A673 (cell line): ENCODE measurements at regions of chr6 and their contacts with region 1.

Region 1: GRCh38 chr6:104597541-104598050 is 262.1 kb downstream of the HACE1 start:
- DNase-seq: peak; percentile 72
- H3K4me3 ChIP-seq: no peak overlapping the region
- H3K27ac ChIP-seq: no peak overlapping the region
- H3K4me1 ChIP-seq: peaks cover 54% of the 10 kb centered on the region
- H3K27me3 ChIP-seq: no peaks in the 10 kb centered on the region
- CTCF ChIP-seq: no peak

Region 2: GRCh38 chr6:104460738-104461483 is 136.7 kb before region 1 on chr6:
- CTCF ChIA-PET with region 1: no interaction called
- POLR2A ChIA-PET with region 1: no interaction called
- intact Hi-C with region 1: no loop called
- DNase-seq: no peak
- H3K4me3 ChIP-seq: no peak overlapping the region
- H3K27ac ChIP-seq: no peak overlapping the region
- H3K4me1 ChIP-seq: no peaks in the 10 kb centered on the region
- H3K27me3 ChIP-seq: no peaks in the 10 kb centered on the region
- CTCF ChIP-seq: no peak

Region 3: GRCh38 chr6:104642871-104643270 is 45.3 kb after region 1 on chr6:
- CTCF ChIA-PET with region 1: no interaction called
- POLR2A ChIA-PET with region 1: no interaction called
- intact Hi-C with region 1: loop called (anchors 2 kb)
- DNase-seq: peak; percentile 14
- H3K4me3 ChIP-seq: no peak overlapping the region
- H3K27ac ChIP-seq: no peak overlapping the region
- H3K4me1 ChIP-seq: peaks cover 21% of the 10 kb centered on the region
- H3K27me3 ChIP-seq: no peaks in the 10 kb centered on the region
- CTCF ChIP-seq: no peak